CD14-positive monocyte (primary cell): ENCODE measurements at regions of chr17 and their contacts with region 1.

Region 1: GRCh38 chr17:76278952-76279741 is 14.0 kb downstream of the UBALD2 start:
- DNase-seq: peak; percentile 72 to 80 (median 79)
- H3K4me3 ChIP-seq: no peak overlapping the region
- H3K4me3 Mint-ChIP-seq: no peak overlapping the region
- H3K27ac ChIP-seq: no peak overlapping the region
- H3K27ac Mint-ChIP-seq: peak overlapping the region in 1 of 7 donors; percentile 82
- H3K4me1 ChIP-seq: peaks cover 0 to 1% of the 10 kb centered on the region in 2 donors
- H3K4me1 Mint-ChIP-seq: peaks cover 5% of the 10 kb centered on the region
- H3K27me3 ChIP-seq: no peaks in the 10 kb centered on the region
- H3K27me3 Mint-ChIP-seq: peaks cover 2 to 5% (median 5%) of the 10 kb centered on the region in 3 donors
- CTCF ChIP-seq: peak; percentile 99

Region 2: GRCh38 chr17:76219670-76220383 is 59.3 kb before region 1 on chr17:
- intact Hi-C with region 1: loop called in 1 of 2 experiments (anchors 10 kb)
- DNase-seq: no peak
- H3K4me3 ChIP-seq: no peak overlapping the region
- H3K4me3 Mint-ChIP-seq: no peak overlapping the region
- H3K27ac ChIP-seq: no peak overlapping the region
- H3K27ac Mint-ChIP-seq: no peak overlapping the region
- H3K4me1 ChIP-seq: no peaks in the 10 kb centered on the region
- H3K4me1 Mint-ChIP-seq: no peaks in the 10 kb centered on the region
- H3K27me3 ChIP-seq: peaks cover 0 to 2% of the 10 kb centered on the region in 2 donors
- H3K27me3 Mint-ChIP-seq: peaks cover 0 to 10% (median 7%) of the 10 kb centered on the region in 3 donors
- CTCF ChIP-seq: no peak

Region 3: GRCh38 chr17:76240461-76241203 is 38.5 kb before region 1 on chr17 and contains the start of gene RNF157:
- intact Hi-C with region 1: loop called in 1 of 2 experiments (anchors 5 kb)
- DNase-seq: peak; percentile 30 to 63 (median 55)
- H3K4me3 ChIP-seq: peak within 1 kb of the TSS; percentile 15 to 75 (median 31)
- H3K4me3 Mint-ChIP-seq: peak within 1 kb of the TSS; percentile 79 to 92
- H3K27ac ChIP-seq: no peak within 1 kb of the TSS
- H3K27ac Mint-ChIP-seq: peak within 1 kb of the TSS in 1 of 7 donors; percentile 70
- H3K4me1 ChIP-seq: peaks cover 11 to 13% of the 10 kb centered on the region in 2 donors
- H3K4me1 Mint-ChIP-seq: peaks cover 20% of the 10 kb centered on the region
- H3K27me3 ChIP-seq: peaks cover 54 to 75% of the 10 kb centered on the region in 2 donors
- H3K27me3 Mint-ChIP-seq: peaks cover 57 to 75% (median 65%) of the 10 kb centered on the region in 3 donors
- CTCF ChIP-seq: no peak
- polyA plus RNA-seq, gene RNF157: 0.03 TPM in 1 of 3 donors, not detected in the others